Prostate gland (tissue), 2 donors: ENCODE measurements at regions of chr4 and their contacts with region 1.

Region 1: GRCh38 chr4:141220655-141221605 is at the start of gene ZNF330:
- DNase-seq: peak; percentile 87
- H3K4me3 ChIP-seq: peak within 1 kb of the TSS; percentile 81 to 96
- H3K27ac ChIP-seq: peak within 1 kb of the TSS; percentile 93 to 97
- H3K4me1 ChIP-seq: no peaks in the 10 kb centered on the region
- H3K27me3 ChIP-seq: no peaks in the 10 kb centered on the region
- CTCF ChIP-seq: peak in 3 of 4 experiments; percentile 19 to 37 (median 29)
- POLR2A ChIP-seq: peak; percentile 82
- total RNA-seq, gene ZNF330: 12.1 to 22.7 TPM

Region 2: DNA sequence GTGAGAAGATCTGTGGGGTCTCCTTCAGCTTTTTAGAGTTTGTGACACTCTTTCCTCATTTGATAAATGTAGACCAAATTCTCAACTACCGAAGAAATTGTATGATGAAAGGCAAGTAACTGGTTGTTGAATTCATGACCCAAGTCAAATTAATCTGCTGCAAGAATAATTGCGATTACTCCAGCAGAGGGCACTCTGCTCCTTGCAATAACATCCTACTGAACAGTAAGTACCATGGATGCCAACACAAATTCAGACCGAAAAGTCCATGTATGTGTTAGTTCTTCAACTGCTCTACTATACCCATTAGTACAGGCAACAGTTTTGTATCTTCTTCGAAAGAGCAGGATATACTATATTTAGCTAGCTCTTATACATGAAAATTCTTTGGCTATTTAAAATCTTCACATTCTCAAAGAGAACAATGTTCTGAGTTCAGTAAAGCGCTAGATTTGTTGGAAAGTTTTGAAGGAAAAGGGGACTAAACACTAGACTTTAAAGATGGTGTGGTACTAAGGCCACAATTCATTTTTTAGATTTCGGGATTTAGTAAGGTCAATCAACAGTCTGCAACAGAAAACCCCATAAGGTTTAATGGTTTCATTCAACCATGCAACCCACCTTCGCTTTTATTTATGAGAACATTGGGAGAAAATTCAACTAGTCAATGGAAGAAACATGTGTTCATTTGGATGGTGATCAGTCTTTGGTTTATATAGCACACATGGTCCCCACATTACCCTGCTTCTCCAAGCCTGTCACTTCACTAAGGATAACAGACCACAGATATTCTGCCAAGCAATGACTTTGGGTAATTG is 359.4 kb before region 1 on chr4:
- intact Hi-C with region 1: loop called (anchors 10 kb)
- DNase-seq: peak; percentile 81
- H3K4me3 ChIP-seq: no peak overlapping the region
- H3K27ac ChIP-seq: no peak overlapping the region
- H3K4me1 ChIP-seq: no peaks in the 10 kb centered on the region
- H3K27me3 ChIP-seq: no peaks in the 10 kb centered on the region
- CTCF ChIP-seq: peak; percentile 44 to 88 (median 82)
- POLR2A ChIP-seq: no peak

Region 3: DNA sequence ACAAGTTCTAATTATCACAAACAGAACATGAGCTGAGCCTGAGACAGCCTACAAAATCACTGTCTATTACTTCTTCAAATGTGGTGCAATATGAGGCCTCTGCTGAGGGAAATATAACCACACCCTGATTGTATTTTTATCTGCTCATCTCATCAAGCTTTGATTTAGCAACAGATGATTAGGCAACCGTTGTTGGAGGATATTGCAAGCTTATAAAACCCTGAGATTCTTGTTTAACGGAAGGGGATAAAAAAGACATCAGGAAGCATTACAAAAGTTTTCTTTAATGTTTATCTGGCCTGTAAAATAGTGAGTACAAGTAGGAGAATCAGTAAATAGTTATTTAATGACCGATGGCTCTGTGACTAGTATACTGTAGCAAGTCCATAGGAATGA is 108.2 kb after region 1 on chr4:
- intact Hi-C with region 1: no loop called
- DNase-seq: peak; percentile 10
- H3K4me3 ChIP-seq: no peak overlapping the region
- H3K27ac ChIP-seq: no peak overlapping the region
- H3K4me1 ChIP-seq: no peaks in the 10 kb centered on the region
- H3K27me3 ChIP-seq: no peaks in the 10 kb centered on the region
- CTCF ChIP-seq: no peak
- POLR2A ChIP-seq: no peak

Region 4: GRCh38 chr4:141350122-141350904 is 129.4 kb after region 1 on chr4:
- intact Hi-C with region 1: no loop called
- DNase-seq: peak; percentile 68
- H3K4me3 ChIP-seq: no peak overlapping the region
- H3K27ac ChIP-seq: no peak overlapping the region
- H3K4me1 ChIP-seq: no peaks in the 10 kb centered on the region
- H3K27me3 ChIP-seq: no peaks in the 10 kb centered on the region
- CTCF ChIP-seq: no peak
- POLR2A ChIP-seq: no peak